Endothelial cell of umbilical vein (primary cell): ENCODE measurements at regions of chr3 and their contacts with region 1.

Region 1: DNA sequence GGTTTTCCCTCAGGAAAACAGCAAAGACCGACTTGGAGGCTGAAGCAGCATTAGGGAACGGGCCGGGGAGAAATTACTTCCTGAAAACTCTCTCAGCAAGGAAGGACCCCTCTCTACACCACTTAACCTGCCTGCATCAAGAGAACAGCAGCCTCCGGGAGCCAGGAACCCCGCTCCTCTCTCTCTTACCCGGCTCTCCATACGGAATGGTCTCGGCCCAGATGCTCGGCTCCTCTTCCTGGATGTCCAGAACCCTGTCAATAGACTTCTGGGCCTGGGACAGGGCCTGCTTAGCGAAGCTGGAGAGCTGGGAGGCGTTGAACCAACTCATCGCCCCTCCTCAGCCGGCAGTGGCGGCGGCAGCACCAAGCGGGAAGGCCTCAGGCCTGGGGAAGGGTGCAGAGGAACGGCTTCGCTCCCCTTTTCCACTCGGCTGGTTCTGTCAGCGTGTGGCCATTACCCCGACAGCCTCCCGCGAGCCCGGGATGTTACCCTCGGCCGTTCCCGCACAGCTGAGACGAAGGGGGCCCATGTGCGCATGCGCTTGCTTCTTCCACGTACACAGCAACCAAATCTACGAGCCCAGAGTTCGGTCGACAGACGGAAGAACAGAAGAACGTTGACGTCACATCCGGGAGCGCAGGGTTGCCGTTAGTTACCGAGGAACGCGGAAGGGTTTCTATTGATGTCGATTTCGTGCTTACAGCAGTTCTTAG is at the start of gene TMF1:
- DNase-seq: peak; percentile 99
- H3K4me3 ChIP-seq: peak within 1 kb of the TSS; percentile 47 to 94 (median 85)
- H3K27ac ChIP-seq: peak within 1 kb of the TSS; percentile 76
- H3K4me1 ChIP-seq: peaks cover 14% of the 10 kb centered on the region
- H3K27me3 ChIP-seq: no peaks in the 10 kb centered on the region
- CTCF ChIP-seq: no peak
- POLR2A ChIP-seq: peak; percentile 84
- total RNA-seq, gene TMF1: 32.3 and 32.7 TPM in 2 replicates

Region 2: GRCh38 chr3:69013253-69014021 is 38.5 kb before region 1 on chr3 and contains the start of gene EOGT:
- CTCF ChIA-PET with region 1: interaction called, 8 read pairs
- POLR2A ChIA-PET with region 1: no interaction called
- dilution Hi-C with region 1: no loop called
- intact Hi-C with region 1: loop called (anchors 1 kb)
- DNase-seq: peak; percentile 93
- H3K4me3 ChIP-seq: peak within 1 kb of the TSS; percentile 56 to 80 (median 76)
- H3K27ac ChIP-seq: peak within 1 kb of the TSS; percentile 97
- H3K4me1 ChIP-seq: peaks cover 53% of the 10 kb centered on the region
- H3K27me3 ChIP-seq: no peaks in the 10 kb centered on the region
- CTCF ChIP-seq: peak; percentile 56 to 77
- POLR2A ChIP-seq: peak; percentile 94
- total RNA-seq, gene EOGT: 99.4 and 103 TPM in 2 replicates

Region 3: DNA sequence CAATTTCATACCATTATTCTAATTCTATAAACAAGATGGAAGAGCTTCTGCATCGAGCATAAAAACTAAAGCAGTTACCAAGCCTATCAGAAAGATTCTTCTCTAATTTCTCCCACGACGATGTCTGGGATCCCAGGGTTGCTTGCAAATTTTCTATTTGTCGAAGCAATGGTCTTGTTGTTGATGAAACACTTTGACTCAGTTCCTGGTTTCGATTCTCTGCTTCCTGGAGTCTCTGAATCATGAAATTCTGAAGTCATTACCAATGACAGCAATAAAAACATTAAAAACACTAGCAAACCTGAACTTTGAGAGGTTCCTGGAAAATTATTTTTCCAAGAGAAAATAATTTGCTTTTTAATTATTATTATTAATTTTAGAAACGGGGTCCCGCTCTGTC is 18.4 kb before region 1 on chr3:
- CTCF ChIA-PET with region 1: no interaction called
- POLR2A ChIA-PET with region 1: no interaction called
- dilution Hi-C with region 1: no loop called
- intact Hi-C with region 1: loop called (anchors 1 kb)
- DNase-seq: peak; percentile 94
- H3K4me3 ChIP-seq: peak overlapping the region in 1 of 3 experiments; percentile 33
- H3K27ac ChIP-seq: peak overlapping the region; percentile 96
- H3K4me1 ChIP-seq: peaks cover 25% of the 10 kb centered on the region
- H3K27me3 ChIP-seq: no peaks in the 10 kb centered on the region
- CTCF ChIP-seq: no peak
- POLR2A ChIP-seq: no peak